Heart left ventricle (tissue), 16 donors: ENCODE measurements at regions of chr3 and their contacts with region 1.

Region 1: DNA sequence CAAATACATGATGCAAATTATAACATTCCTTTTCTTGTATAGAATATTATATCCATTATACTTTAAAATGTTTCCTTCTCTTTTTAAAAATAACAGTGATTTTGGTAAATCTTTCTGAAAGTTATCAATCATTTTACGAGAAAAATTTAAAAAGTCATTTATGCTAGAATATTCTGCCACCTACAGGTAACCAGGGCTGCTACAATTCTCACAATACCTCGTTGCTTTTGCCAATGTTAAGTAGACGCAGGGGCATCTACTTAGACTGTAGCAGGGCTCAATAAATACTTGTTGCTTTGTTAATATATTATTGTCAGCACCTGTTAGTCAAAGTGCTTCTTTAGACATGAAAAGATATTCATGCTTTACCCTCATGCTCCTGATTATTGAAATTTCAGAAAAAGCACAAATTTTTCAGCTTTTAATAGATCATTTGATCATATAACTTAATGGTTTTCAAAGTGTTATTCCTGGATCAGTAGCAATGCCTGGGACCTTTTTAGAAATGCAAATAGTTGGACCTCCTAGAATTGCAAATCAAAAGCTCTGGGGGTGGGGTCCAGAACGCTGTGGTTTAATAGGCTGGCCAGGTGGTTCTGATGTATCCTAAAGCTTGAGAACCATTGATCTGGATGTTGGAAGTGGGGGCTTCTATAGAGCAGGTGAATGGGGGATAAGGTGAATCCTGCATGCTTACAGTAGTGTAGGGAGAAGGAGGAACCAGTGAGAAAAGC is 223.6 kb upstream of the PDZRN3 start:
- DNase-seq: no peak
- ATAC-seq: peak in 1 of 4 donors; percentile 58
- H3K4me3 ChIP-seq: no peak overlapping the region
- H3K27ac ChIP-seq: no peak overlapping the region
- H3K4me1 ChIP-seq: peaks cover 0 to 9% (median 0%) of the 10 kb centered on the region in 12 donors
- H3K27me3 ChIP-seq: no peaks in the 10 kb centered on the region
- CTCF ChIP-seq: peak; percentile 47 to 78 (median 66)
- POLR2A ChIP-seq: no peak

Region 2: GRCh38 chr3:73100741-73101559 is 747.4 kb before region 1 on chr3:
- intact Hi-C with region 1: loop called in 5 of 10 experiments (anchors 5 to 10 kb)
- DNase-seq: peak in 4 of 5 donors; percentile 70 to 80 (median 76)
- ATAC-seq: peak; percentile 65 to 87 (median 79)
- H3K4me3 ChIP-seq: no peak overlapping the region
- H3K27ac ChIP-seq: no peak overlapping the region
- H3K4me1 ChIP-seq: peaks cover 0 to 8% (median 1%) of the 10 kb centered on the region in 12 donors
- H3K27me3 ChIP-seq: no peaks in the 10 kb centered on the region
- CTCF ChIP-seq: peak; percentile 84 to 96 (median 91)
- POLR2A ChIP-seq: no peak

Region 3: DNA sequence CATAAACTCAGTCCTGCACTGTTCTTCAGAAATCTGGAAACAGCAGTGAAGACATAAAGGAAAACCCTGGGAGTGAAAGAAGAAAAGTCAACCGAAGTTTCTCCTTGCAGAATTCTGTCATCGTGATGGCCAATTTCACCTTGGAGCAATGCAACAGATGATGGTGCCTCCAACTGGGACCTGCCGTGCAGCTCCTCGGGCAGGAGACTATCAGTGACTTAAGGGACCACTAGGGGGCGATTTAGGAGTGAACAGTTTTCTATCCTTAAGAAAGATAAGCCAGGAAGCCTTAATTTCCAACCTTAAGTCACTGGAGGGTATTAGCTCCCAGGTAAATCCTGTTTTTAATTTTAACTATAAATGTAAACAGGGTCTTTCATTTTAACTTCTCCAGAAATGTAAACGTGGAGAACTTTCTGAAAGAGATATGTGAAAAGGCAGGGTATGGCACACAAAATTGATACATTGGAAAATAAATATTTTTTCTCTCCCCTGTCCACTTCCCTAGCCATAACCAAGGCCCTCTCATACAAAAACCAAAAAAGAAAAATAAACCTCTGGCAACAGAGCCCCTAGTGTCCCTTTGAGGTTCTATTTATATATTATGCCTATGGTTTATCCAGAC is 339.9 kb before region 1 on chr3:
- intact Hi-C with region 1: loop called in 9 of 10 experiments (anchors 2 to 10 kb)
- DNase-seq: peak in 2 of 5 donors; percentile 43 to 52
- ATAC-seq: peak; percentile 47 to 72 (median 59)
- H3K4me3 ChIP-seq: no peak overlapping the region
- H3K27ac ChIP-seq: peak overlapping the region in 10 of 12 donors; percentile 6 to 85 (median 48)
- H3K4me1 ChIP-seq: peaks cover 0 to 73% (median 33%) of the 10 kb centered on the region in 12 donors
- H3K27me3 ChIP-seq: no peaks in the 10 kb centered on the region
- CTCF ChIP-seq: peak; percentile 65 to 79 (median 76)
- POLR2A ChIP-seq: no peak

Region 4: DNA sequence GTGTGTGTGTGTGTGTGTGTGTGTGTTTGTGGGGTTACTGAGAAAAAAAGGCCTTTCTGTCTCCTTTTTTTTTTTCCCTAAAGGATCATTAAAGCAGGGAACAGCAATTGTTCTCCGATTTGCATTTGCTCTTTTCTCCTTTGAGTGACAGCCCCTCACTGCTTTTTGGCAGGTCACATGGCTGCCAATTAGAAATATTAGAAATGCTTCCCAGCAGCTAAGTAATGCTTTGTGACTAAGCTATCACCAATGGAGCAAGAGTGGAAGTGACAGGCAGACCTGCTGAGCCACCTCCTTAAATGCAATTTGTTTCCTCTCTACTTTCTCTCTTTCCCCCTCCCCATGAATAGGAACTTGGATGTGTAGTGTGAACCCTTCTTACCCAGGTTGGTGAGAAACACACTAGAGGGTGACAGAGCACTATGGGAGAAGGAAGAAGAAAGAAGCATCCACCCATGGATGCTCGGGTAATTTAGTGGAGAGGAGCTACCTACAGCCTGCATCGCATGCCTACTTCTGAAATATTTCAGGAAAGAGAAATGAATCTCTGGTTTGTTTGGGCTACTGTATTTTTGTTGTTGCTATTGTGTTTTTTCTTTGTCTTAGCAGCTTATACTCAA is 58.4 kb before region 1 on chr3:
- intact Hi-C with region 1: loop called in 1 of 10 experiments (anchors 10 kb)
- DNase-seq: no peak
- ATAC-seq: peak in 1 of 4 donors; percentile 35
- H3K4me3 ChIP-seq: no peak overlapping the region
- H3K27ac ChIP-seq: no peak overlapping the region
- H3K4me1 ChIP-seq: peaks cover 0 to 10% (median 0%) of the 10 kb centered on the region in 12 donors
- H3K27me3 ChIP-seq: no peaks in the 10 kb centered on the region
- CTCF ChIP-seq: peak in 4 of 12 donors; percentile 10 to 13 (median 11)
- POLR2A ChIP-seq: no peak